Mammary epithelial cell (primary cell): ENCODE measurements at regions of chr12 and their contacts with region 1.

Region 1: DNA sequence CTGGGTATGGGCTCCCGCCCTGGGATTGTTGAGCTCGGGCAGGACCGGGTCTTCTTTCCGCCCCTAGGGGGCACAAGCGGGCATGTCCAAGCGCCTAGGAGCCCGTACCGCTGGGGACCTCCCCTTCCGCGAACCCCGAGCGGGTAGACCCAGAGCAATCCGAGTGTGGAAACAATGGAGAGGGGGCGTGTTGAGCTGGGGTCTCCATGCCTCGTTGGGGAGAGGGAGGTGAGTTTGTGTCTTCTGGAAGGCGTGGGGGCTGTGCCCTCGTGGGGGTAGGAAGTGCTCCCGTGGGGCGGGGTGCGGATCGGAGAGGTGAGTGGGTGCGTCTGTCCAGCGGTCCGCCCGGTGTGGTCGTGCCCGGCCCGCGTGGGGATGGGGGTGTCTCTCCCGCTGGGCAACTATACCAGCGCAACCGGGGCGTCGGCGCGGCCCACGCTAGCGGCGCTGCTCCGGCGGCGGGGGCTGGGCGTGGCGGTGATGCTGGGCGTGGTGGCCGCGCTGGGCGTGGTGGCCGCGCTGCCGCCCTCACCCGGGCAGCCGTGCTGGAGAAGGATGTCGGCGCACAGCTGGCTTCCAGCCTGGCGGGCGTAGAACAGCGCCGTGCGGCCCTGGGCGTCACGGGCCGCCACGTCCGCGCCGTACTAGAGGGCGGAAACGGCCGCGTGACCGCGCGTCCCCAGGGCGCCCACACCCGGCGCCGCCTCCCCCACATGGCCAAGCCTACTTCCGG is 12.2 kb downstream of the AGAP2 start:
- DNase-seq: peak; percentile 73
- H3K4me3 ChIP-seq: peak overlapping the region; percentile 64 to 82 (median 81)
- H3K27ac ChIP-seq: peak overlapping the region; percentile 38
- H3K4me1 ChIP-seq: peaks cover 10% of the 10 kb centered on the region
- H3K27me3 ChIP-seq: no peaks in the 10 kb centered on the region
- CTCF ChIP-seq: peak; percentile 55 to 91

Region 2: DNA sequence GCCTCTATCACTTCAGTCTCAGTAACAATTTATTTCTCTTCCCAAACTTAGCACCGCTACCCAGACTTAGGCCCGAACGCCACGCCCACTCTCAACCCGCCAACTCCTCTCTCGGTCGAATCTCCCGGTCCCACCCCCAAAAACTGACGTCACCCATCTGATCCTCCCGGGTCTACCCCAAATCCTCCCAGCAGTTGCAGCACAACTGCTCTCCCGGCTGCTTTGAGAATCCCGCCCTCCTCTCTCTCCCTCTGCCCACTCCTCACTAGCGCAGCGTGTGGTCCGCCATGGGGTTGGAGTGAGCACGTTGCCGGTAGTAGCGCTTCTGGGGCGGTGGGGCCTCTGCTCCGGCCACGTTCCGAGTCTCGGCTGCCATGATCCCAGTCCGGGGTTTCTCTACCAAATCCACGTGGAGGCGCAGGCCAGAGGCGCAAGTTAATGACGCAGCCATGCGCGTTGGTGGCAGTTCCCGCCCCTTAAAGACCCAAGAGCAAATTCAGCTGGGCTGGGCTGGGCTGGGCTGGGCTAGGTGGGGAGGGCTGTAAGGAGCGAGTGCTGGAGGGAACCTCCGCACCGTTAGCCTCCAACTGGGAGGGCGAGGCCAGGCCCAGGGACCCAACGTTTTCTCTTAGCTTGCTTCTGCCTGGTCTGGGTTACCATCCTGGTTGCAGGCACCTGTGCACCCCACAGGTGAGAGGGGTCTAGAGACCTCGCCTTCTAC is 45.6 kb after region 1 on chr12 and contains the start of gene METTL1:
- CTCF ChIA-PET with region 1: no interaction called
- dilution Hi-C with region 1: no loop called
- in situ Hi-C with region 1: no loop called
- intact Hi-C with region 1: loop called (anchors 2 kb)
- DNase-seq: peak; percentile 97
- H3K4me3 ChIP-seq: peak within 1 kb of the TSS; percentile 83 to 94 (median 83)
- H3K27ac ChIP-seq: peak within 1 kb of the TSS; percentile 94
- H3K4me1 ChIP-seq: peaks cover 25% of the 10 kb centered on the region
- H3K27me3 ChIP-seq: no peaks in the 10 kb centered on the region
- CTCF ChIP-seq: no peak
- total RNA-seq, gene METTL1: 7.7 to 28.7 TPM

Region 3: GRCh38 chr12:57815177-57816000 is 89.1 kb after region 1 on chr12:
- CTCF ChIA-PET with region 1: no interaction called
- dilution Hi-C with region 1: no loop called
- in situ Hi-C with region 1: no loop called
- intact Hi-C with region 1: no loop called
- DNase-seq: no peak
- H3K4me3 ChIP-seq: no peak overlapping the region
- H3K27ac ChIP-seq: no peak overlapping the region
- H3K4me1 ChIP-seq: peaks cover 5% of the 10 kb centered on the region
- H3K27me3 ChIP-seq: no peaks in the 10 kb centered on the region
- CTCF ChIP-seq: peak in 1 of 2 donors; percentile 17